ENCODE measurements at regions of chr18 and their contacts with region 1.

Region 1: DNA sequence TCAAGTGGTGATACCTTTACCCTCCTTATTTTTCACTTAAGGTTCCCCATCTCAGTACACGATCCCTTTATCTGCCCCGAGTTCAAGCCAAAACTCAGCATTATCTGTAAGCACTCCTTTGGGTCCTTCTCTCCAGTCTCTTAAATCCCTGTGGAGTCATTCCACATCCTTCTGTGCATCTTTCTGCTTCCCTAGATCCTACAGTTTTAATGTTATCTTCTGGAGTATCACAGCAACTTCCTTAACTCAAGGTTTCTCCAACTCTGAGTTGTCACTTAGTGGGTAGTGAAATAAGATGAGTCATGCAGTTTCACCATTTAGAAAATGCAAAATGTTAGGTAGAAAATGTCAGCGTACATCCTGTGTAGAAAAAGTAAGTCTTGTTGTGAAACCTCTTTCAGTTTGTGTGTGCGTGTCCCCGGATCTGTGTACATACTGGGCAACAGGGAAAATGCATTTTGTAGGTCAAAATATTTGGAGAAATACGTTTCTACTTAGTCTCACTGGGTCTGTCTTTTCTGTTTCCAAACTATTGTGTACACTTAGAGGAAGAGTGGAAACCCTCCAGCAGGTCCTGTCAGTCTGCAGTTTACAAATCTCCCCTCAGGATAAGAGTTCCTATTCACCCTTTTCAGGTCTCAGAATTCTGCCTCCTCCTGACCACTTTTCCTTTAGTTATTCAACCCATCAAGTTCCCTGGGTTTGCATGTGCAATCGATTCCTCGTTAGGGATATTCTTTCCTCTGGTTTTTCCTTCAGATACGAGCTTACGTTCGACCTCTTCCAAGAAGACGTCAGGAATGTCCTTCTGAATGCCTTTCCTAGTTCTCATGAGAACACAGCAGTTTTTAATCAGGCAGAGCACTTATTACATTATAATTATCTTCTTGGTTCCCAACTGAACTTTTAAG is 154.8 kb downstream of the TGIF1 start:
- DNase-seq: peak; percentile 61
- ATAC-seq: peak; percentile 70
- H3K4me3 Mint-ChIP-seq: no peak overlapping the region
- H3K27ac Mint-ChIP-seq: no peak overlapping the region
- H3K4me1 Mint-ChIP-seq: peaks cover 10% of the 10 kb centered on the region
- H3K27me3 Mint-ChIP-seq: no peaks in the 10 kb centered on the region
- CTCF ChIP-seq: no peak

Region 2: GRCh38 chr18:3297025-3297984 is 307.4 kb before region 1 on chr18:
- CTCF ChIA-PET with region 1: interaction called, 13 read pairs
- POLR2A ChIA-PET with region 1: interaction called, 3 read pairs
- intact Hi-C with region 1: no loop called
- DNase-seq: peak; percentile 99
- ATAC-seq: peak; percentile 99
- H3K4me3 Mint-ChIP-seq: peak overlapping the region; percentile 92
- H3K27ac Mint-ChIP-seq: peak overlapping the region; percentile 86
- H3K4me1 Mint-ChIP-seq: peaks cover 5% of the 10 kb centered on the region
- H3K27me3 Mint-ChIP-seq: peaks cover 24% of the 10 kb centered on the region
- CTCF ChIP-seq: peak; percentile 83

Region 3: GRCh38 chr18:3554091-3554601 is 50.6 kb before region 1 on chr18:
- CTCF ChIA-PET with region 1: no interaction called
- POLR2A ChIA-PET with region 1: no interaction called
- intact Hi-C with region 1: no loop called
- DNase-seq: no peak
- ATAC-seq: no peak
- H3K4me3 Mint-ChIP-seq: no peak overlapping the region
- H3K27ac Mint-ChIP-seq: no peak overlapping the region
- H3K4me1 Mint-ChIP-seq: no peaks in the 10 kb centered on the region
- H3K27me3 Mint-ChIP-seq: no peaks in the 10 kb centered on the region
- CTCF ChIP-seq: no peak

Region 4: DNA sequence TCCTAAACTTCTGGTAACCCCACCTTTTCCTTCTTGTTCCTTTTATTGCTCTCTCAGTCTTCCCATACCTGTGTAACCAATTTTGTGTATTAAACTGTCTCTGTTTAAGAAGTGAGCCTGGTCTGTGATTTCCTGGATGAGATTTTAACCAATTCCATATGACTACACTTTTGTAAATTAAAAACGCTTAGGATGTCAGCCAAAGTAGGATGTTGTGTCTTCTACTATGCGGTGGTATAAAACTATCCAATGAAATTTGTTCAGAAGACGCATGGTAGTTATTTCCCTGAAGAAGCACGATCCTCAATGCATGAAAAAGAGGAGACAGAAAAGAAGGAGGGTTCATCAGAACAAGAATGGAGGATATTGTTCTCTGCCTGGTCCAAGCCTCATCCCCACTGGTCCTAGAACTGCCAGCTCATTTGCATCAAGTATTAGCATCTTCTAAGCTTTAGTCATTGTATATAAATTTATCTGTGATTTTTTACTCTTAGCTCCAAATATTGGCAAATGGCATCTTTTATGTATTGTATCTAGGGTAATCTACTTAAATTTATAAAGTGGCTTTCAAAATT is 27.4 kb before region 1 on chr18:
- CTCF ChIA-PET with region 1: no interaction called
- POLR2A ChIA-PET with region 1: no interaction called
- intact Hi-C with region 1: no loop called
- DNase-seq: no peak
- ATAC-seq: no peak
- H3K4me3 Mint-ChIP-seq: no peak overlapping the region
- H3K27ac Mint-ChIP-seq: no peak overlapping the region
- H3K4me1 Mint-ChIP-seq: peaks cover 2% of the 10 kb centered on the region
- H3K27me3 Mint-ChIP-seq: no peaks in the 10 kb centered on the region
- CTCF ChIP-seq: no peak

Region 5: DNA sequence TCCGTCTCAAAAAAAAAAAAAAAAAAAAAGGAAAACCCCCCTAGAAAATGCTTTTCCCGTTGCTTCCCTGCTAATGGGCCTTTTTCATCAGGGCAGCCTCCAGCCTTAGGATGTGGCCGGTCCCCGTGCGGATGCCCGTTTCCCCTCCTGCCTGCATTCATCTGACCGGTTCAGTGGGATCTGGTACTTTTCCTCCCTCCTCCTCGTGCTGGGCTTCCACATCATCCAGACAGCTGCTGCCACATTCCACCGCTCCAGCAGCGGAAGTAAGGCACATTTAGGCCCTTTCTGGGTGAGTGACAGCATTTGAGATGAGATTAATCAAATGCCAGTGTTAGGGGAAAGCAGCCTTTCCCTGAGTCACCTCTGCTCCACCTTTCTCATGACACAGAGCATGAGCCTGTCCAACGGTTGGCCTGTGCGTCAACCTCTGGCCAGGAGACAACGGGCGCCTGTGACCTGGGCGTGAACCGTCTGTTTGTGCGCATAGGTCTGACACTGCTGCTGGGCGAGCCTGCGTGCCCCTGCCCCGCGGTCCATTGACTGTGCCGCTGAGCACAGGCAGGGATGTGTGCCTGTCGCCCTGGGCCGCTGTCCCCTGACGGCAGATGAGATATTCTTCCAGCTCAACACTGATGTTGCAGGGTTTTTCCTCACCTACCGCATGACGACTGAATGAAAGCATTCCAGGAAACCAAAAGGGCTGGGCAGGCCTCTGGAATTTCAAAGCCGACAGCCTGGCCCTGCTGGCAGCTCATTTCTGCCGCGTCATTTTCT is 19.2 kb after region 1 on chr18:
- CTCF ChIA-PET with region 1: interaction called, 5 read pairs
- POLR2A ChIA-PET with region 1: interaction called, 21 read pairs
- intact Hi-C with region 1: loop called (anchors 1 kb)
- DNase-seq: peak; percentile 57
- ATAC-seq: peak; percentile 19
- H3K4me3 Mint-ChIP-seq: peak overlapping the region; percentile 60
- H3K27ac Mint-ChIP-seq: peak overlapping the region; percentile 92
- H3K4me1 Mint-ChIP-seq: peaks cover 32% of the 10 kb centered on the region
- H3K27me3 Mint-ChIP-seq: no peaks in the 10 kb centered on the region
- CTCF ChIP-seq: no peak